HCT116 (cell line): ENCODE measurements at regions of chr2 and their contacts with region 1.

Region 1: DNA sequence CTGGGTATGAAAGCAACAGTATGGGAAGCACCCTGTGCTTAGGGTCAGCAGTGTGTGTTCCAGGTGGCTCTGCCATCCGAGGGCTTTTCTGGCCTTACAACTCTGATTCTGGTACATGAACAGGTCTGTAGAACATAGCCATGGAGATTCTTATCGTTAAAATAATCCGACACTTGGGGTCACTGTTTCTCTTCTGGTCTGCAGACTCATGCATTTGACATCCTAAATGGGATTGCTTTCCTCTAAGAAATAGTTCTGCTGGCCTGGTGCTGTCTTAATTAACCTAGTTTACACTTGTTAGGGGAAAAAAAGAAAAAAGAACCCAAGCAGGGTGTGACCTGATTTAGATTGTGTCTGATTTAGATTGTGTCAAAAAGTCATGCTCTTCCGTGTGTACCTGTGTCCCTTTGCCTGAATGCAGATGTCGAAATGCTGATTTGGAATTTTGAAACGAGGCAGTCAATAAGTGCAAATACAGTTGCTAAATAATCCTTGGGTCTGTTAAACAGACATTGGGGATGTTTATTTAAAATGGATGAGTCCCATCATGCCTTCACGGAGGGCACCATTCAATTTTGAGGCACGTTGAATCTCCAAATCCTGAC is 59.6 kb downstream of the TRPM8 start:
- DNase-seq: peak; percentile 62
- ATAC-seq: peak; percentile 32; the same call in 1 of the 2 replicates
- H3K4me3 ChIP-seq: no peak overlapping the region
- H3K27ac ChIP-seq: no peak overlapping the region
- H3K4me1 ChIP-seq: peaks cover 31 to 64% of the 10 kb centered on the region in 2 experiments
- H3K27me3 ChIP-seq: no peaks in the 10 kb centered on the region
- CTCF ChIP-seq: peak; percentile 37 to 81 (median 65); a peak in 5 of 6 replicates
- POLR2A ChIP-seq: no peak
- RAD21 ChIP-seq: peak; percentile 97

Region 2: GRCh38 chr2:234025466-234026185 is 48.8 kb after region 1 on chr2:
- CTCF ChIA-PET with region 1: no interaction called
- POLR2A ChIA-PET with region 1: no interaction called
- RAD21 ChIA-PET with region 1: no interaction called
- intact Hi-C with region 1: no loop called
- DNase-seq: no peak
- ATAC-seq: no peak
- H3K4me3 ChIP-seq: no peak overlapping the region
- H3K27ac ChIP-seq: no peak overlapping the region
- H3K4me1 ChIP-seq: peaks cover 0 to 12% of the 10 kb centered on the region in 2 experiments; a peak in 1 of 4 replicates
- H3K27me3 ChIP-seq: no peaks in the 10 kb centered on the region
- CTCF ChIP-seq: no peak
- POLR2A ChIP-seq: no peak
- RAD21 ChIP-seq: no peak

Region 3: DNA sequence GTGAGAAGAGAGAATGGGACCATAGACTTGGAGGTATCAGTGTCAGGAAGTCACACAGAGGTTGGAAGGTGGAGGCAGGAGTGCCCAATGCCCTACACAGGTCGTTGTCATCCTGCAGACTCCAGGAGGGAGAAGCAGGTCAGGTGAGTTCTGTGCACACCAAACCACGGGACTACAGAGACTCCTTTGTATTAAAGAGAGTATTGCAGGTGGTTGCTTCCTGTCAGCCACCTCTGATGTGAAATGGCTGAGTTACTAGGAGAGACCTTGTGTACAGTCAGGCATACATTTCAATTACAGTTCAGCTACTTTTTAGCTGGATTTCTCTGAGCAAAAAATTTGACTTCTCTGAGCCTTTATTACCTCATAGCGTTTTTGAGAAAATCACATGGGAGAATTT is 125.3 kb after region 1 on chr2:
- CTCF ChIA-PET with region 1: no interaction called
- POLR2A ChIA-PET with region 1: no interaction called
- RAD21 ChIA-PET with region 1: no interaction called
- intact Hi-C with region 1: loop called (anchors 5 kb)
- DNase-seq: peak; percentile 46
- ATAC-seq: peak; percentile 96
- H3K4me3 ChIP-seq: no peak overlapping the region
- H3K27ac ChIP-seq: no peak overlapping the region
- H3K4me1 ChIP-seq: peaks cover 3 to 11% of the 10 kb centered on the region in 2 experiments; a peak in 1 of 4 replicates
- H3K27me3 ChIP-seq: no peaks in the 10 kb centered on the region
- CTCF ChIP-seq: peak in 2 of 3 experiments; percentile 14 to 34; a peak in 2 of 6 replicates
- POLR2A ChIP-seq: no peak
- RAD21 ChIP-seq: peak; percentile 68

Region 4: GRCh38 chr2:234257856-234258561 is 281.2 kb after region 1 on chr2:
- CTCF ChIA-PET with region 1: no interaction called
- POLR2A ChIA-PET with region 1: no interaction called
- RAD21 ChIA-PET with region 1: no interaction called
- intact Hi-C with region 1: loop called (anchors 1 kb)
- DNase-seq: peak; percentile 92
- ATAC-seq: peak; percentile 98
- H3K4me3 ChIP-seq: peak overlapping the region; percentile 3 to 25; a peak in 1 of 4 replicates
- H3K27ac ChIP-seq: peak overlapping the region; percentile 45
- H3K4me1 ChIP-seq: peaks cover 12 to 58% of the 10 kb centered on the region in 2 experiments
- H3K27me3 ChIP-seq: no peaks in the 10 kb centered on the region
- CTCF ChIP-seq: peak; percentile 59 to 77 (median 76); a peak in 5 of 6 replicates
- POLR2A ChIP-seq: no peak
- RAD21 ChIP-seq: peak; percentile 80

Region 5: GRCh38 chr2:234348081-234348480 is 371.3 kb after region 1 on chr2:
- CTCF ChIA-PET with region 1: no interaction called
- POLR2A ChIA-PET with region 1: no interaction called
- RAD21 ChIA-PET with region 1: no interaction called
- intact Hi-C with region 1: no loop called
- DNase-seq: no peak
- ATAC-seq: no peak
- H3K4me3 ChIP-seq: no peak overlapping the region
- H3K27ac ChIP-seq: no peak overlapping the region
- H3K4me1 ChIP-seq: no peaks in the 10 kb centered on the region
- H3K27me3 ChIP-seq: no peaks in the 10 kb centered on the region
- CTCF ChIP-seq: no peak
- POLR2A ChIP-seq: no peak
- RAD21 ChIP-seq: no peak

Region 6: DNA sequence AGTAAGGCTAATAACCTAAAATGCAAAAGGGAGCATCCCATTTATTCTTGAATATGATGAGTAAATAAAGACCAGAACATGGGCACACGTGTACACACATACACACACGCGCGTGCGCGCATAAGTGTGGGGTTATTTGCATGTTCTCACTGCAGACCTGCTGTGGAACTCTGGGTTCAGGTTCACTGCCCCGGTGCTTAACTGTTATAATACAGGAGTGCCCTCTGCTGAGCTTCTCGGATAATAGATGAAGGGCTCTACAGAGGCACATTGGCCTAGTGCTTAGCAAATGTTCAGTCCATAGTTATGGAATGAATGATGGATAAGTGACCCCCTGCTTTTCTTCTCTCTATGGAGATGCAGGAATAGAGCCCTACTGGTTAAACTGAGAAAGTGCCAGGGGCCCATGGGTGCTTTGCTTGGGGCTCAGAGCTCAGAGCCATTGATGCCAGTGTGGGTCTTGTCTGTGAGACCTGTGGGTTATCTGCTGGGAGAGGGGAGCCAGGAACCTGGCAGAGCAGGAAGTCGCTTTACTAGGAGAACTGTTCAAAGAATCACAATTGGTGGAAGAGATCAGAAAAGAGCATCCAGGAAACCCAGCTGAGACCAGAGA is 523.7 kb after region 1 on chr2:
- CTCF ChIA-PET with region 1: interaction called, 5 read pairs
- POLR2A ChIA-PET with region 1: interaction called, 4 read pairs
- RAD21 ChIA-PET with region 1: no interaction called
- intact Hi-C with region 1: loop called (anchors 1 kb)
- DNase-seq: peak; percentile 49
- ATAC-seq: peak; percentile 60
- H3K4me3 ChIP-seq: no peak overlapping the region
- H3K27ac ChIP-seq: no peak overlapping the region
- H3K4me1 ChIP-seq: peaks cover 24 to 29% of the 10 kb centered on the region in 2 experiments
- H3K27me3 ChIP-seq: no peaks in the 10 kb centered on the region
- CTCF ChIP-seq: peak; percentile 42 to 82 (median 69); a peak in 5 of 6 replicates
- POLR2A ChIP-seq: no peak
- RAD21 ChIP-seq: peak; percentile 94

Region 7: DNA sequence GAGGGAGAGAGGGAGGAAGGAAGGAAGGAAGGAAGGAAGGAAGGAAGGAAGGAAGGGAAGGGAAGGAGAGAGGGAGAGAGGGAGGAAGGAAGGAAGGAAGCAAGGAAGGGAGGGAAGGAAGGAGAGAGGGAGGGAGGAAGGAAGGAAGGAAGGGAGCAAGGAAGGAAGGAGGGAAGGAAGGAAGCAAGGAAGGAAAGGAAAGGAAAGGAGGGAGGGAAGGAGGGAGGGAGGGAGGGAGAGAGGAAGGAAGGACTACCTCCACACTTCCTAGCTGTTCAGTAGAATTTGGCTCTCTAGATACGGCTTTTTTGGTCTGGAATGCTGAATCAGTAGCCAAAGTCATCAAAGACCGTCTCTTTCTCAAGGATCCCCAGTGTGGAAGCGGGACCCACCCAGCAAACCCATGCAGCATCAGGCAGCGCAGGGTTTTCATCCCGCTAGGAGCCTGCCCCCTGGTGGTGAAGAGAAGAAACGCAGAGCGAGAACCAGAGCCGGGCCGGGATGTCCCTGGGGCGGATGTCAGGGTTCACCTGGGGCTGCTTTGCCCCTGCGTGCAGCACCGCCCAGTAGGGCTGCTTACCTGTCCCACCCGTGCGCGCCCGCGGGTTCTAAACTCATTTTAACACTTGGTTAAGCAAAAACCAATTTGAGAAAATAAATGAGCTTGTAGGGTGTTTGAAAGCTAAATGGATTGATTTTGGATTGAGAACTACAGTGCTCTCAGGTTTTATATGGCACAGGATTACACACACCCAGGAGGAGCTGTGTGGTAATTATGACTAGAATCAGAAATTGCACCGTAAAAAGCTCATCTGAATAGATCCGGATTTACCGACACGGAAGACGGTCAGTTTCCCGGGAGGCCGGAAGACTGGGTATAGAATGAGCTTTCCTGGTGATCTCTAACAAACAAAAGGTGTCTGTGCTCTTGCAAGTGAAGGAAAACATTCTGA is 568.1 kb after region 1 on chr2:
- CTCF ChIA-PET with region 1: interaction called, 12 read pairs
- POLR2A ChIA-PET with region 1: interaction called, 3 read pairs
- RAD21 ChIA-PET with region 1: interaction called, 3 read pairs
- intact Hi-C with region 1: loop called (anchors 1 kb)
- DNase-seq: peak; percentile 38
- ATAC-seq: peak; percentile 96
- H3K4me3 ChIP-seq: no peak overlapping the region
- H3K27ac ChIP-seq: no peak overlapping the region
- H3K4me1 ChIP-seq: peaks cover 3 to 8% of the 10 kb centered on the region in 2 experiments; a peak in 2 of 4 replicates
- H3K27me3 ChIP-seq: no peaks in the 10 kb centered on the region
- CTCF ChIP-seq: peak; percentile 84 to 85 (median 85)
- POLR2A ChIP-seq: no peak
- RAD21 ChIP-seq: peak; percentile 90